K562 (cell line): ENCODE measurements at regions of chr18 and their contacts with region 1.

Region 1: DNA sequence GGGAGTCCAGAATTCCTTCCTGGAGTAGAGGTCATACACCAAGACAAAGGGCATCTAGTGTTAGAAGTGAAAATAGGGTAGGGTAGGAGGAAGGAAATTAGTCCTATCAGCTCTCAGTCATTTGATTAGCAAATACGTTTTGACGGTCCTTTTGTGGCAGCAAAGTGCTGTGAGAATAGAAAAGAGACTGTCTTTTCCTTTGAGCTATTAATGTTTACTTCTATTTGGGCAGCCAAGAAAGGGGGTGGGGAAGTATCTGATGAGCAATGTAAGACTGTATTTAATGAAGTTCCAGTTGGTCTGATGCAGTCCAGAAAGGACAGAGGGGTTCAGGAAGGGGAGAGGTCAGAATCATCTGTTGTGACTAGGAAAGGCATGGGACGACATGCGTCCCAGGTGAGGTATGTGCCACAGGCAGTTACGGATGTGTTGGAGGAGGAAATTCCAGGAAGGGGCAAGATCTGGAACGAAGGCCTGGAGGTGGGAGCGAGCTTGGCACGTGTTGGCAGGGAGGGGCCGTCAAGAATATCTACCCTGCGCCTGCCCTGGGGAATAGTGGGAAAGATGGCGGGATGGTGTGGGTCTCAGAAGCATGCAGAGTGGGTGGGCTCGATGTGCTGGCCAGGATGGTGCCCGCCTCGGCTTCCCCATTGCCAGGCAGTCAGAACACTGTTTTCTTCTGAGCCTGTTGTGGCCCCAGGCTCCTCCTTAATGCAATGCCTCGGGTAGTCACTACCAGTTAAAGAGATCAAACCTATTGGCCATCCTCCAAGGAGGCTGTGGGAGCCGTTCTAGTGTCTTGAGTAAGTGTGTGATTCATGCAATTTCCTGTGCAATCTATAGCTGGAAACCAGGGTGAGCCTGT is 57.9 kb upstream of the TXNDC2 start:
- DNase-seq: peak; percentile 42 to 94 (median 62)
- ATAC-seq: peak; percentile 81
- H3K4me3 ChIP-seq: no peak overlapping the region
- H3K27ac ChIP-seq: peak overlapping the region; percentile 83
- H3K4me1 ChIP-seq: peaks cover 50 to 71% of the 10 kb centered on the region in 2 experiments
- H3K27me3 ChIP-seq: no peaks in the 10 kb centered on the region
- CTCF ChIP-seq: no peak
- EP300 ChIP-seq: peak; percentile 64; the same call in 1 of the 2 replicates
- POLR2A ChIP-seq: no peak
- RAD21 ChIP-seq: peak; percentile 19 to 21; a peak in 1 of 4 replicates

Region 2: GRCh38 chr18:9796935-9797549 is 30.8 kb before region 1 on chr18:
- CTCF ChIA-PET with region 1: no interaction called
- POLR2A ChIA-PET with region 1: no interaction called
- in situ Hi-C with region 1: no loop called
- intact Hi-C with region 1: loop called (anchors 1 kb)
- DNase-seq: no peak
- ATAC-seq: peak; percentile 12; the same call in 1 of the 3 replicates
- H3K4me3 ChIP-seq: no peak overlapping the region
- H3K27ac ChIP-seq: 0 out of 3 replicates have a peak overlapping the region, but pooled peaks have one; percentile 3
- H3K4me1 ChIP-seq: peaks cover 4 to 13% of the 10 kb centered on the region in 2 experiments; a peak in 4 of 5 replicates
- H3K27me3 ChIP-seq: no peaks in the 10 kb centered on the region
- CTCF ChIP-seq: no peak
- EP300 ChIP-seq: no peak
- POLR2A ChIP-seq: no peak
- RAD21 ChIP-seq: no peak

Region 3: GRCh38 chr18:9838144-9838877 is 10.4 kb after region 1 on chr18:
- CTCF ChIA-PET with region 1: no interaction called
- POLR2A ChIA-PET with region 1: interaction called, 11 read pairs
- in situ Hi-C with region 1: no loop called
- intact Hi-C with region 1: no loop called
- DNase-seq: no peak
- ATAC-seq: no peak
- H3K4me3 ChIP-seq: no peak overlapping the region
- H3K27ac ChIP-seq: no peak overlapping the region
- H3K4me1 ChIP-seq: peaks cover 4 to 16% of the 10 kb centered on the region in 2 experiments
- H3K27me3 ChIP-seq: no peaks in the 10 kb centered on the region
- CTCF ChIP-seq: no peak
- EP300 ChIP-seq: no peak
- POLR2A ChIP-seq: no peak
- RAD21 ChIP-seq: no peak

Region 4: DNA sequence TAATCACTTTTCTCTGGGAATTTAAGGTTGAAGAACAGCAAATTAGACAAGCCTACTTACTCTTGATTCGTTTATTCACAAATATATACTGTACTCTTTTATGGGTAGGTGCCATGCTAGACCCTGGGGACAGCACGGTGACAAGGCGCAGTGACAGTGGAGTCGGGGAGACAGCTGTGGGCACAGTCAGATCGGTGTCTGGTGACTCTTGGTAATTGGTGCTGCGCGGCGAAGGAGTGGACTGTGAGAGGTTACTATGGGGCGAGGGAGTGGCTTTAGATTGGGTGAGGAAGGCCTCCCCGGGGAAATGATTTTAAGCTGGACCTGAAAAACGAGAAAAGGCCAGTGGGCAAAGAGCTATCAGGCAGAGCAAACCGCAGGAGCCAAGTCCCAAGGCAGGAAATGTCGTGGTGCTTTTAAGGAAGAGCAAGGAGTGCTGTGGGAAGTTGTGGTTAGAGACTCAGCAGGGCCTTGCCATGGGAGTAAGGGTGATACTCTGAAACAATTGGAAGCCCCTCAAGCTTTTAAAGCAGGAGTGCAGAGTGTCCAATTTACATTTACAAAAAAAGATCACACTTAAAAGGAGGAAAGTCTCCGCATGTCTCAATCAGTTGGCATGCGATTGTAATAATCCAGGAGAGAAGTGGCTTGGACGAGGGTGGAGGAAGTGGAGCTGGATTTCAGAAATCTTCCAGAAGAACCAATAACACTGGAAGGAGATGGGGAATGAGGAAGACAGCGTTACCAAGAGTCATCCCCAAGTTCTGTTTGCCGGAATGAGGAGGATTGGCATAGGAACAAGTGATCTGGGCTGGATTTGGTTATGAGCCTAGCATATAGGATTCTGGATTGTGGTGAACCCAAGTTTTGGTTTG is 21.8 kb after region 1 on chr18:
- CTCF ChIA-PET with region 1: no interaction called
- POLR2A ChIA-PET with region 1: interaction called, 13 read pairs
- in situ Hi-C with region 1: no loop called
- intact Hi-C with region 1: no loop called
- DNase-seq: peak; percentile 51 to 90 (median 69)
- ATAC-seq: peak; percentile 96
- H3K4me3 ChIP-seq: no peak overlapping the region
- H3K27ac ChIP-seq: peak overlapping the region; percentile 68
- H3K4me1 ChIP-seq: peaks cover 11 to 46% of the 10 kb centered on the region in 2 experiments
- H3K27me3 ChIP-seq: no peaks in the 10 kb centered on the region
- CTCF ChIP-seq: no peak
- EP300 ChIP-seq: no peak
- POLR2A ChIP-seq: 0 out of 2 replicates have a peak, but pooled peaks have one; percentile 41
- RAD21 ChIP-seq: peak in 1 of 2 experiments; percentile 31; a peak in 3 of 4 replicates

Region 5: GRCh38 chr18:9876867-9877654 is 49.2 kb after region 1 on chr18:
- CTCF ChIA-PET with region 1: no interaction called
- POLR2A ChIA-PET with region 1: no interaction called
- in situ Hi-C with region 1: no loop called
- intact Hi-C with region 1: loop called (anchors 2 kb)
- DNase-seq: peak; percentile 80 to 98 (median 88)
- ATAC-seq: peak; percentile 85
- H3K4me3 ChIP-seq: peak overlapping the region; percentile 7; the same call in 1 of the 2 replicates
- H3K27ac ChIP-seq: peak overlapping the region; percentile 97
- H3K4me1 ChIP-seq: peaks cover 23 to 57% of the 10 kb centered on the region in 2 experiments
- H3K27me3 ChIP-seq: no peaks in the 10 kb centered on the region
- CTCF ChIP-seq: peak in 1 of 3 experiments; percentile 15; a peak in 2 of 6 replicates
- EP300 ChIP-seq: peak; percentile 96
- POLR2A ChIP-seq: peak; percentile 71; the same call in 1 of the 2 replicates
- RAD21 ChIP-seq: peak; percentile 34 to 38